Lower leg skin (tissue), 4 donors: ENCODE measurements at regions of chr1 and their contacts with region 1.

Region 1: DNA sequence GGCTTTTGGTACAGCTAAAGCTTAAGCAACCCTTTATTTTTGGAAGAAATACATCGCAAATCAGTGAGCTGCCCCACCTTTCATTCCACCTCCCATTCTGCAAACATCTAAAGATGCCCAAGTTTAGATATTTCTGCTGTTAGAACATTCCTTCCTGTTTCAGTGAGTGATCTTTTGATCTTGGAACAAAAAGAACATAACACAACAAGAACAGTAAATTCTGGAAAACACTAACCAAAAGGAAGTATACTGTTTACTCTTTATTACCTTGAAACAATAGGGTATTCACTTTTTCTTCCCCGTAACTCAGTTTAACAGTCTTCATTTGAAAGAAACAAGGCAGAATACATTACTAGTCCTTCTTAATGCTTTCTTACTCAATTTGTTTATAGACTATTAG is 40.6 kb downstream of the HNRNPR start:
- DNase-seq: no peak
- H3K4me3 ChIP-seq: no peak overlapping the region
- CTCF ChIP-seq: no peak
- POLR2A ChIP-seq: no peak

Region 2: DNA sequence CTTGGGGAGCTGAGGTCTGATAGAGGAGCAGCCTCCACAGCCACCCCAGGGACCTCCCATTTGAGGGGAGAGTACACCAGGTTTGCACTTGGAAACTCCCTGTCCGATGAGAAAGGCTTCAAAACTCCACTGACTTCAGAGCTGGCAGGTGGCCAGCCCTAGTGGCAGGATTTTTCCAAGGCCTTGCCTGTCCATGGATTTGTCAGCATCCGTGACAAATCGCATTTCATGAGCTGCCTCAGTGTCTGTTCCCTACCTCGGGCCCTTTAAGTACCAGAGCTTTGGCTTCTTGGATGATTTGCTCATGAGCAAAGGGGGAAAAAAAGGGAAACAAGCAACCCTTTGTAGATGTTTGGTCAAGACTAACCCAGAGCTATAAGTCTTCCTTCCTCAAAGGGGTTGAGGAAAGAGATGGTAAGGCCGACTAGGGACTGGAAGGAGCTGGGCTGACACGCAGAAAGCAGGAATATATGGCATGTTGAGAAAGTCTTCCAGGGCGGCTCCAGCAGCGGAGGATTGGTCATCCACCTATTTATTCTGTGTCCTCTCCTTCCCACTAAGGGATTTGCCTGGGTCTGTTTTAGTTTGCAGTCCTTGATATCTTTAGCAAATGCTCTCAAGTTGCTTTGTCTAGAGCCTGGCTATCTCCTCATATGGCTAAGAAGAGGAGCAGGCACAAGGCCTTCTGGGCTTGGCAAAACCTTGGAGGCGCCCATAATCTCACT is 1363.7 kb before region 1 on chr1:
- intact Hi-C with region 1: loop called (anchors 5 kb)
- DNase-seq: peak; percentile 78 to 98
- H3K4me3 ChIP-seq: no peak overlapping the region
- CTCF ChIP-seq: peak in 1 of 3 donors; percentile 43
- POLR2A ChIP-seq: no peak

Region 3: GRCh38 chr1:22289307-22289995 is 1014.1 kb before region 1 on chr1:
- intact Hi-C with region 1: no loop called
- DNase-seq: peak in 1 of 2 donors; percentile 37
- H3K4me3 ChIP-seq: no peak overlapping the region
- CTCF ChIP-seq: no peak
- POLR2A ChIP-seq: no peak

Region 4: GRCh38 chr1:23210351-23210785 is 93.2 kb before region 1 on chr1:
- intact Hi-C with region 1: no loop called
- DNase-seq: no peak
- H3K4me3 ChIP-seq: no peak overlapping the region
- CTCF ChIP-seq: no peak
- POLR2A ChIP-seq: no peak